Tibial artery (tissue), 4 donors: ENCODE measurements at regions of chr22 and their contacts with region 1.

Region 1: GRCh38 chr22:50326959-50327710 is at the start of gene DENND6B:
- DNase-seq: peak; percentile 73 to 89
- H3K4me3 ChIP-seq: peak within 1 kb of the TSS; percentile 61 to 69
- H3K27ac ChIP-seq: peak within 1 kb of the TSS; percentile 85 to 92
- H3K4me1 ChIP-seq: peaks cover 0 to 12% (median 7%) of the 10 kb centered on the region in 4 donors
- H3K27me3 ChIP-seq: no peaks in the 10 kb centered on the region
- CTCF ChIP-seq: peak; percentile 44 to 99

Region 2: DNA sequence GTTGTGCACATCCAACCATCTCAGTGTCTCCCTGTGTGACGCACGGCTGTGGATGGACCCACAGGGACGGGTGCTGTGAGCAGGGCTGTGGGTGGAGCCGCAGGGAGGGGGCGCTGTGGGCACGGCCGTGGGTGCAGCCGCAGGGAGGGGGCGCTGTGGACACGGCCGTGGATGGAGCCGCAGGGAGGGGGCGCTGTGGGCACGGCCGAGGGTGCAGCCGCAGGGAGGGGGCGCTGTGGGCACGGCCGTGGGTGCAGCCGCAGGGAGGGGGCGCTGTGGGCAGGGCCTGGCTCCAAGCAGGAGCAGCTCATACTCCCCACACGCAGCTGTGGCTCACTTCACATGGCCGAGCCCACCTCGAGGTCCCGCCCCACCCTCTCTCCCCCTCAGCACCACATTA is 51.0 kb before region 1 on chr22:
- intact Hi-C with region 1: loop called (anchors 2 kb)
- DNase-seq: peak in 1 of 2 donors; percentile 84
- H3K4me3 ChIP-seq: no peak overlapping the region
- H3K27ac ChIP-seq: peak overlapping the region in 1 of 2 donors; percentile 45
- H3K4me1 ChIP-seq: peaks cover 0 to 12% (median 11%) of the 10 kb centered on the region in 4 donors
- H3K27me3 ChIP-seq: peaks cover 4 to 16% of the 10 kb centered on the region in 2 donors
- CTCF ChIP-seq: peak; percentile 14 to 59

Region 3: DNA sequence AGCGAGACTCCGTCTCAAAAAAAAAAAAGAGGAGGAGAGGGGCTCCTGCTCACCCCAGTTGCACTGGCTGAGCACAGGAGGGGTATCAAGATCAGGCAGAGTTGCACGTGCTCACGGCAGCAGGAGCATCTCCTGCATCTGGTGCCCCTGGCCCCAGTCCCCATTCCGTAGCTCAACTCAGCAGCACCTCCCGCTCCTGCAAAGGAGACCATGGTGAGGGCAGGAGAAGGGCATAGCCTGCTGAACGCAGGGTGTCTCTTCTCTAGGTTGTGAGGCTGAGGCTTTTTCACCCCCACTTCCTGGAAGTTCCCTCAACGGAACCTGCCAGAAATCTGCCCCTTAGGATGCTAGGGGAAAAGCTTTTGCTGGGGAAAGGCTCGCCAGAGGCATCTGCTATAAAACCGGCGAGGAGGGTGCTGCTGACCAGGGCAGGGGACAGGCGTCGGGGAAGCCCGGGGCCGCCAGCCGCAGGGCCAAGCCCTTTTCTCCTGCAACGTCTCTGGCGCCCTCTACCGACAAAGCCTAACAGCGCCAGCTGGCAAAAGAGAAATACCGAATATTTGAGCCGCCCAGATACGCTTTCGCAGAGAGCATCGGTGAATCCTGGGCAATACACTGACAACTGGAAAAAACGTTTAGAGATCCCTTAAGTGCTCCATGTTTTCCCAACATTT is 15.0 kb after region 1 on chr22:
- intact Hi-C with region 1: loop called (anchors 2 kb)
- DNase-seq: peak; percentile 91 to 92
- H3K4me3 ChIP-seq: peak overlapping the region; percentile 99
- H3K27ac ChIP-seq: peak overlapping the region in 1 of 2 donors; percentile 88
- H3K4me1 ChIP-seq: peaks cover 0 to 22% (median 14%) of the 10 kb centered on the region in 4 donors
- H3K27me3 ChIP-seq: no peaks in the 10 kb centered on the region
- CTCF ChIP-seq: peak; percentile 94 to 98

Region 4: DNA sequence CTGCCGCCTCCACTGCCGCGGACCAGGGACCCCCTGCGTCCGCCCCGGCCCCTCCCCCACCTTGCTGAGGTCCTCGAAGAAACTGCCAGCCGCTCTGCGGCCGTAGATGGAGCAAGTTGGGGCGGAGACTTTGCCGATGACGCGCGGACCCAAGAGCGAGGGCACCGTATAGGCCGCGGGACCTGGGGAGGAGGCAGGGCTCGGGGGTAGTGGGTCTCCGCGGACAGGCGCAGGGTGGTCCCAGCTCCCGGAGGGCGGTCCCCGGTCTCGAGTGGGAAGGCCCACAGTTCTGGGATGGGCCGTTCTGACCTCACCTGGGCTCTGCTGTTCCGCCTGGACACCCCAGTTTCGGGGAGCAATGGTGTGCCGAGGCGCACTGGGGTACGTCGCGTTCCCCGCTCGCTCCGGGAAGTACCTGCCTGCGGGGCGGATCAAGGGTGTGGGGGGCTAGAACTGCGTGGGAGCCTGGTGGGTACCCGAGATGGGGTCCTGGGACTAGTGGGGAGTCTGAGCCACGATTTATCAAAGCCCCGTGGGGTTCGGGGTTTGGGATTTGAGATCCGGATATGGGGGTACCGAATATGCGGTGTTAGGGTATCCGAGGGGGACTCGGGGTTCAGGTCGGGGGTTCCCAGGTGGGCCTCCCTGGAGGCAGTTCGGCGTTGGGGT is 203.9 kb after region 1 on chr22:
- intact Hi-C with region 1: no loop called
- DNase-seq: peak; percentile 87 to 91
- H3K4me3 ChIP-seq: peak overlapping the region; percentile 44 to 53
- H3K27ac ChIP-seq: peak overlapping the region; percentile 57 to 69
- H3K4me1 ChIP-seq: peaks cover 0 to 51% (median 35%) of the 10 kb centered on the region in 4 donors
- H3K27me3 ChIP-seq: peaks cover 6 to 66% of the 10 kb centered on the region in 2 donors
- CTCF ChIP-seq: no peak